Mammary epithelial cell (primary cell): ENCODE measurements at regions of chr18 and their contacts with region 1.

Region 1: DNA sequence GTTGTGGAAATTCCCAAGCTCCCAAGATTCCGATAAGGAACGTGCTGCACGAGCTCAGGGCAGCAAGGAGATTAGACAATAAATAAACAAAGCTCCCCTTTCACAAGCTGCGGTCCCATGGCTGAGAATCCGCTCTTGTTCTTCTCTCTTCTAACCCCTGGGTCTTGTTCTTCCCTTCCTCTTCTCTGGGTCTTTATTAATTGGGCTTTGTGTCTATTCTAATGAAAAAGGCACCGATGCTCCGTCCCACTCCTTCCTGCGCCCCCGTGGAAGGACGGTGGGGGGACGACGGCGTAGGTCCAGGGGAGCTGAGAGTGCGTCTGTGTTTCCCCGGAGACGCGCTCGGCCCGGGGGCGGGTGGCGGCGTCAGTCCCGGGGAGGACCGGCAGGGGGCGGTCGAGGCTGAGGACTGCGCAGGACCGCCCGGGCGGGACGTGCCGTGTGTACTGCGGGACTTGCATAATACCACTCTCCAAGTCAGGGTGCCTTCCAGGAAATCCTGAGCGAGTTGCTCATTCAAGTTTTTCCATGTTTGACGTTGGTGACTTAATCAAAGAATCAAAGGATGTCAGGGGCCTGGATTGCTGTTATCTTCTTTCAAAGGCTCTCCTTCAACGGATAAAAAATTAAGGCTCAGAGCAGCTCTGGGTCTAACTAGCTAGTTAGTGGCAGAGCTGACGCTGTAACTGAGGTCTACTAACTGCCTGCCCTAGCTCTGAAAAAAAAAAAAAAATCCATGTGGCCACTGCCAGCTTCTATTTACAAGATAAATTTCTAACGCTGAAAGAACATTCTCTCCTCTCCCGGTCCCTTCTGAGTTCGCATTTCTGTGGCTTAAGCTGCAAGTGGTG is 321.4 kb downstream of the TGIF1 start:
- DNase-seq: peak; percentile 83
- H3K4me3 ChIP-seq: peak overlapping the region in 2 of 3 experiments; percentile 27 to 39
- H3K27ac ChIP-seq: peak overlapping the region; percentile 47
- H3K4me1 ChIP-seq: peaks cover 5% of the 10 kb centered on the region
- H3K27me3 ChIP-seq: no peaks in the 10 kb centered on the region
- CTCF ChIP-seq: peak; percentile 67 to 93

Region 2: GRCh38 chr18:3995476-3996102 is 224.2 kb after region 1 on chr18:
- CTCF ChIA-PET with region 1: interaction called, 8 read pairs
- dilution Hi-C with region 1: loop called (anchors 25 kb)
- in situ Hi-C with region 1: no loop called
- intact Hi-C with region 1: loop called (anchors 1 kb)
- DNase-seq: peak; percentile 55
- H3K4me3 ChIP-seq: peak overlapping the region in 2 of 3 experiments; percentile 3 to 22
- H3K27ac ChIP-seq: no peak overlapping the region
- H3K4me1 ChIP-seq: peaks cover 5% of the 10 kb centered on the region
- H3K27me3 ChIP-seq: no peaks in the 10 kb centered on the region
- CTCF ChIP-seq: peak; percentile 87 to 92

Region 3: GRCh38 chr18:4068552-4069158 is 297.3 kb after region 1 on chr18:
- CTCF ChIA-PET with region 1: no interaction called
- dilution Hi-C with region 1: no loop called
- in situ Hi-C with region 1: no loop called
- intact Hi-C with region 1: loop called (anchors 1 kb)
- DNase-seq: peak; percentile 44
- H3K4me3 ChIP-seq: no peak overlapping the region
- H3K27ac ChIP-seq: no peak overlapping the region
- H3K4me1 ChIP-seq: no peaks in the 10 kb centered on the region
- H3K27me3 ChIP-seq: no peaks in the 10 kb centered on the region
- CTCF ChIP-seq: peak; percentile 65 to 77